ENCODE measurements at regions of chr1 and their contacts with region 1.

Region 1: GRCh38 chr1:151888972-151889570 is 20.2 kb downstream of the THEM4 start:
- DNase-seq: no peak
- ATAC-seq: peak; percentile 42
- H3K4me3 Mint-ChIP-seq: no peak overlapping the region
- H3K27ac Mint-ChIP-seq: no peak overlapping the region
- H3K4me1 Mint-ChIP-seq: peaks cover 19% of the 10 kb centered on the region
- H3K27me3 Mint-ChIP-seq: no peaks in the 10 kb centered on the region

Region 2: DNA sequence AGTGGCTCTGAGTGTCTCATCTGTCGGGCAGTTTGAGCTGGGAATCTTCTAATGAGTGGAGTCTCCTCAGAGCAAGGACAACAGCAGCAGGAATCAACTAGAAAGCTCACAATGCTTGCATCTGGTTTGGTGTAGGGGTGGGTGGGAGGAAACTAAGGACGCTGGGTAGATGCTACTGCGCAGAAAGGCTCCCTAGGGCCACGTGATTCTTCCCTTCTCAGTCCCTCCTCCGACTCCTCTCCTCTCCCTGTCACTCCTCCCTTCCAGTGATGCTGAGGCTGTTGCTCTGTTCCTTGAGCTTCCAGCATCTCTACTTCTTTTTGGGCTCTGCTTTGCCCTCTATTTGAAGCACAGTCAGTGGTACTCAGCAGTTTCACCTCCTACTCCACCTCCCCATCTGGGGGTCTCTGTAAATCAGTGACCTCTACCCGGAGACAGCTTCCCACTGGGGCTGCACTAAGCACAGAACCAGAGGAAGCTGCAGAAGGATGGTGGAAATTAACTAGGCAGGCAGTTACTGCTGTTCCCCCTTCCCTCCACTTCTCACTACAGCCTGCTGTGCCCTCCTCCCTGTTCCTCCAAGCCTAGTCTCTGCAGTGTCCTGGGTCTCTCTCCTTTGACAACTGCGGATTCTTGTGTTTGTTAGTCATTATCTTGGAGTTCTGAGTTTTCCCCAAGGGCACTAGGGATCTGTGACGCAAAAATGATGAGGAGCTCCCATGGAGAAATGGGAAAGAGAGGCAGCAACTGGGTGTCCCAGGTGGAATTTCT is 89.7 kb before region 1 on chr1:
- CTCF ChIA-PET with region 1: no interaction called
- DNase-seq: no peak
- ATAC-seq: no peak
- H3K4me3 Mint-ChIP-seq: no peak overlapping the region
- H3K27ac Mint-ChIP-seq: no peak overlapping the region
- H3K4me1 Mint-ChIP-seq: peaks cover 9% of the 10 kb centered on the region
- H3K27me3 Mint-ChIP-seq: peaks cover 7% of the 10 kb centered on the region

Region 3: GRCh38 chr1:151819976-151820623 is 69.0 kb before region 1 on chr1:
- CTCF ChIA-PET with region 1: no interaction called
- DNase-seq: no peak
- ATAC-seq: no peak
- H3K4me3 Mint-ChIP-seq: no peak overlapping the region
- H3K27ac Mint-ChIP-seq: no peak overlapping the region
- H3K4me1 Mint-ChIP-seq: peaks cover 58% of the 10 kb centered on the region
- H3K27me3 Mint-ChIP-seq: no peaks in the 10 kb centered on the region

Region 4: DNA sequence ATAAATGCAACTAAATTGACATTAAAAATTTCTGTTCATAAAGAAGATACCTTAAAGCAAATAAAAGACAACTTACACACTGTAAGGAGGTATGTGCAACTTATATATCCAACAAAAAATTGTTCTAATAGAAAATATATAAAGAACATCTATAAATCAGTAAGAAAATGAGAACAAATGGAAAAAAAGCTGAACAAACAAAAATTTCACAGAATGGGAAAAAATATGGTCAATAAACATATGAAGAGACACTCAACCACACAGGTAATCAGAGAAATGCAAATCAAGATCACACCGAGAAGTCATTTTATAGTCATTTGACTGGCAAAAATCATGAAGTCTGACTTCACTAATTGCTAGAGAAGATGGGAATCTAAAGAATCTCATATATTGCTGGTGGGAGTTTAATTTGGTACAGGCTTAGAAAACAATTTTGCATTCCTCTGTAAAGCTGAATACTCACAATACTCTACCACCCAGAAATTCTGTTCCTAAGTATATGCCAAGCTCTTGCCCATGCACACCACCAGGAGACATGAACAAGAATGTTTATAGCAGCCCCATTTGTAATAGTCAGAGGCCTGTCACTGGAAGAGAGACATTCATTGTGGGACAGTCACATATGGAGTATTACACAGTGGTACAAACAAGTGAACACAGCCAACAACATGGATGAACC is 13.5 kb before region 1 on chr1:
- CTCF ChIA-PET with region 1: interaction called, 10 read pairs
- DNase-seq: no peak
- ATAC-seq: no peak
- H3K4me3 Mint-ChIP-seq: no peak overlapping the region
- H3K27ac Mint-ChIP-seq: no peak overlapping the region
- H3K4me1 Mint-ChIP-seq: peaks cover 4% of the 10 kb centered on the region
- H3K27me3 Mint-ChIP-seq: no peaks in the 10 kb centered on the region

Region 5: DNA sequence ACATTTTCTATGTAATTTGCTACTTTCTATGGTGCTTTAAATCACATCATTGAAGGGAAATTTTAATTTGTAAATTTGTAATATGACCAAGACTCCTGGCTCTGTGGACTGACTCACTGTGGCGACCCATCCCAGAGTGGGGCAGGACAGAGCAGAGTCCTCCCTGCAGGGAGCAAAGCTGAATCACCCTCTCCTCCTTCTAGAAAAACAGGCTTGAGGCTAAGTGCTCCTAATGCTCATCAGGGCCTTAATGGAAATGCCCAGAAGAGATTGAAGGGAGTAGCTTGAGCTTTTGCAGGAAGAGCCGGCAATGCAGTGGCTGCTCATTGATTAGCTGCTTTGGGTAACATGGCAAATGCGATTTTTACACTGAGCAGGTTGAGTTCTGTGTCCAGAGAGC is 87.8 kb after region 1 on chr1:
- CTCF ChIA-PET with region 1: no interaction called
- DNase-seq: no peak
- ATAC-seq: no peak
- H3K4me3 Mint-ChIP-seq: no peak overlapping the region
- H3K27ac Mint-ChIP-seq: no peak overlapping the region
- H3K4me1 Mint-ChIP-seq: peaks cover 22% of the 10 kb centered on the region
- H3K27me3 Mint-ChIP-seq: peaks cover 17% of the 10 kb centered on the region